ENCODE measurements at regions of chr19 and their contacts with region 1.

Region 1: DNA sequence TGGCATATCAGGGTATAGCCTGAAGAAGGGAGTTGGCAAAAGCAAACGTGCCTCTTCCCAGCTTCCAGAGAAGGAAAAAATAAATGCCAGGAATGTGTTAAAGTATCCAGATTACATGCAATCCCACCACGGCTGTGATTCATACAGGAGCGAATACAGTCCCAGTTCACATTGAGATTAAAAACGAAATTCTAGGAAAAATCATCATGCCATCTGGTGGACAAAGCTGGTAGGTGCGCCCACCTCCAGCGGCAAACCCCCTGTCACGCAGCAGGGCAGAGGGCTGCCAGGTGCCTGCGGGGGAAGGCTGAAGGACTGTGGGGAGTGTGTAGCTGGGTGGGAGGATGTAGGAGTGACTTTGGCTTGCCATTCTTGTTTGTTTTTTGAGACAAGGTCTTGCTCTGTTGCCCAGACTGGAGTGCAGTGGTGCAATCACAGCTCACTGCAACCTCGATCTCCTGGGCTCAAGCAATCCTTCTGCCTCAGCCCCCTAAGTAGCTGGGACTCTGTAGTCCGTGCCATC is 6.4 kb upstream of the DMWD start:
- DNase-seq: peak; percentile 41
- H3K4me3 ChIP-seq: no peak overlapping the region
- H3K27ac ChIP-seq: no peak overlapping the region
- H3K4me1 ChIP-seq: peaks cover 3% of the 10 kb centered on the region
- H3K27me3 ChIP-seq: no peaks in the 10 kb centered on the region
- CTCF ChIP-seq: peak; percentile 78 to 82

Region 2: DNA sequence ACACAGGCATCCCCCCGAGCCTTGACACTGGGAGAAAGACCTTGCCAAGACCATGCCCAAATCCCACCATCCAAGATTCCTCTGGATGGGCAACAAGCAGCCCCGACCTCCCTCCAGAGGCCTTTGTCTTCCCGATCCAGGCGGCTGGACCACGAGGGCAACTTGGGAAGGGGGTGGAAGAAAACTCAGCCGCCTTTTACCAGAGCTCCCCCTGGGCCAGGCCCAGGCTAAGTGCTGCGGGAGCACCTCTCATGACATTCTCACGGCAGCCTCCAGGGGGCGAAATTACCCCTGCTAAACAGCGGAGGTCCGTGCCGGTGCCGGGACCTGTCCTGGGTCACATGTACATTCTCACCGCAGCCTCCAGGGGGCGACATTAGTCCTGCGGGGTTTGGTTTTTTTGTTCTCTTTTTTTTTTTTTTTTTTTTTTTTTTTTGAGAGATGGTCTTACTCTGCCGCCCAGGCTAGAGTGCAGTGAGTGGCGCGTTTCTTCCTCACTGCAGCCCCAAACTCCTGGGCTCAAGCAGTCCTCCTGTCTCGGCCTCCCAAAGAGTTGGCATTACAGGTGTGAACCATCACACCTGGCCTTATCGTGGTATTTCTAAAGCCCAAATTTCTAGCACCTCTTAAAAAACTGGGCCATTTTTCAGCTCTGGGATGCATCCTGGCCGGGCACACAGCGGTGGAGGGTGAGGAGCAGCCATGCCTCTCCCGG is 18.1 kb after region 1 on chr19:
- CTCF ChIA-PET with region 1: interaction called, 3 read pairs
- dilution Hi-C with region 1: no loop called
- in situ Hi-C with region 1: no loop called
- intact Hi-C with region 1: loop called (anchors 2 kb)
- DNase-seq: peak; percentile 75
- H3K4me3 ChIP-seq: no peak overlapping the region
- H3K27ac ChIP-seq: no peak overlapping the region
- H3K4me1 ChIP-seq: peaks cover 14% of the 10 kb centered on the region
- H3K27me3 ChIP-seq: no peaks in the 10 kb centered on the region
- CTCF ChIP-seq: peak; percentile 96 to 98

Region 3: GRCh38 chr19:45834970-45835369 is 35.9 kb after region 1 on chr19:
- CTCF ChIA-PET with region 1: interaction called, 3 read pairs
- dilution Hi-C with region 1: loop called (anchors 5 kb)
- in situ Hi-C with region 1: no loop called
- intact Hi-C with region 1: no loop called
- DNase-seq: no peak
- H3K4me3 ChIP-seq: no peak overlapping the region
- H3K27ac ChIP-seq: no peak overlapping the region
- H3K4me1 ChIP-seq: no peaks in the 10 kb centered on the region
- H3K27me3 ChIP-seq: no peaks in the 10 kb centered on the region
- CTCF ChIP-seq: no peak

Region 4: DNA sequence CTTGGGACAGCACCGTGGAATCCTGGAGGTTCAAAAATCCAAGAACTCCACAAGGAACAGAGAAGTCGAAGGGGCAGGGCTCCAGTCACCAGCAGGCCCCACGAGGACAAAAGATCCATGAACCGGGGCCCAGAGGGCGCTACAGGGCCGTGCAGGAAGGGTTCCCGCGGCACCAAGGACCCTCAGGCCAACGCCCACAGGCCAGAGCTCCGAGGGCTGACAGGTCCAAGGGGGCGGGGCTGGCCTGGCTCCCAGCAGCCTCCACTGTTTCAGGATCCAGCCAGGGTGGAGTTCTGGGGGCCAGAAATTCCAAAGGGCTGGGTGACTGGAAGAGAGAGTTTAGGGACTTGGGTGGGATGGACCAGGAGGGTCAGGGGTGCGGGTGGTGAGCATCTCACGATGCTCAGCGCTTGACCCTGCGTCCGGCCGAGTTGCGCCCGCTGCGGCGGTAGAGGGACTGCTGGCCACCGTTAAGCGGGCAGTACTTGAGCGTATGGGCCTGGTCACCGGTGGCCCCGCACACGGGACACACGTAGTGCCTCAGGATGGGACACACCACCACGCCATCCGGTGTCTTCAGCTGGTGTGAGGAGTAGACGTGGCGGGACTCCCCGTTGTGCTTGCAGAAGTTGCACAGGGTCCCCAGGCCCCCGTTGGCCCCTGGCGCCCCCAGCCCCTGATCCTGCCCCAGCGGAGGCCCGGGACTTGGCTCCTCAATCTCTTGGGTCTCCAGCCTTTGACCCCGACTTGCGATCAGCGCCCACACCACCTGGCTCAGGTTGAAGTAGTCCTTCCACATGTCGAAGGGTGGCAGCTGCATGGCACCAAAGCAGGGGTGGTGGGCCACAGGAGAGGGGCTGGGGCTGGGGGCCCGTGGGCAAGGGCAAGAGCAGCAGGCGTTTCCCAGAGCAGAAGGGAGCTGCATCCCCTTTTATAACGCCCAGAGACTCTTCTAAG is 115.1 kb after region 1 on chr19 and contains the start of gene NANOS2:
- CTCF ChIA-PET with region 1: no interaction called
- dilution Hi-C with region 1: no loop called
- in situ Hi-C with region 1: no loop called
- intact Hi-C with region 1: no loop called
- DNase-seq: no peak
- H3K4me3 ChIP-seq: no peak within 1 kb of the TSS
- H3K27ac ChIP-seq: no peak within 1 kb of the TSS
- H3K4me1 ChIP-seq: no peaks in the 10 kb centered on the region
- H3K27me3 ChIP-seq: no peaks in the 10 kb centered on the region
- CTCF ChIP-seq: peak in 1 of 2 donors; percentile 12
- total RNA-seq, gene NANOS2: not detected